ENCODE measurements at regions of chr10 and their contacts with region 1.

Region 1: DNA sequence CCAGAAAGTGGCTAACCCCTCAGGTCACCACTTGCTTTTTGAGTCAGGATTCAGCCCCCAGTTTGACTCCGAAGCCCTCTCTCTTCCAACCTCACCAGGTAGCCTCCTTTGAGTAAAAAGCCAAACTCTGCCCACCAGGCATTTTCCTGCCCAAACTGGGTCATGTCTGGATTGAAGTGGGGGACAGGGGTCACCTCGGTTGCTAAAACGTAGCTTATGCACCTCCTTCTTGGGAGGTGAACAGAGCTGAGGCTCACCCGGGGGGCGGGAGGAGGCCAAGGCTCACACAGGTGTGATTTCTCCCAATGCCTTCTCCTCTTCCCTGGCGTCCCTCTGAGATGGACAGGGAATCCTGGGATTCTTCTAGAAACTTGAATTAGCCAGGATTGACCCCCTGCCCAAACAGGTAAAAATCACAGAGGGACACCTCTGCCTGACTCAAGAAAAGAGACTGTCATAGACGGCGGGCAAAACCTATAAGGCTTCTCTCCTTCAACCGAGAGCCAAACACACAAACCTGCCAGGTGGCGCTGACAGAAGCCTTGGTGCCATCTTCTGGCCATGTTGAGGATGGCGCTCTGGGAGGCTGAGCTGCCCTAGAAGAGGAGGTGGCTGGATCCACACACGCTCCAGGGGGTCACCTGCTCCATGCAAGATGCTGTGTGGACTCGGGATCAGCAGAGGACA is 51.6 kb downstream of the PRLHR start:
- DNase-seq: peak; percentile 64
- H3K4me3 ChIP-seq: no peak overlapping the region
- H3K27ac ChIP-seq: no peak overlapping the region
- H3K4me1 ChIP-seq: no peaks in the 10 kb centered on the region; a peak in 1 of 4 replicates
- H3K27me3 ChIP-seq: no peaks in the 10 kb centered on the region; the same call in 1 of the 2 replicates
- CTCF ChIP-seq: peak; percentile 51
- EP300 ChIP-seq: no peak
- RAD21 ChIP-seq: peak; percentile 78

Region 2: GRCh38 chr10:118183180-118183579 is 360.7 kb before region 1 on chr10:
- CTCF ChIA-PET with region 1: no interaction called
- POLR2A ChIA-PET with region 1: no interaction called
- DNase-seq: no peak
- H3K4me3 ChIP-seq: no peak overlapping the region
- H3K27ac ChIP-seq: no peak overlapping the region
- H3K4me1 ChIP-seq: no peaks in the 10 kb centered on the region
- H3K27me3 ChIP-seq: no peaks in the 10 kb centered on the region
- CTCF ChIP-seq: no peak
- EP300 ChIP-seq: no peak
- RAD21 ChIP-seq: no peak

Region 3: GRCh38 chr10:118557946-118558345 is 14.1 kb after region 1 on chr10:
- CTCF ChIA-PET with region 1: interaction called, 25 read pairs
- POLR2A ChIA-PET with region 1: no interaction called
- DNase-seq: no peak
- H3K4me3 ChIP-seq: no peak overlapping the region
- H3K27ac ChIP-seq: no peak overlapping the region
- H3K4me1 ChIP-seq: no peaks in the 10 kb centered on the region
- H3K27me3 ChIP-seq: no peaks in the 10 kb centered on the region
- CTCF ChIP-seq: no peak
- EP300 ChIP-seq: no peak
- RAD21 ChIP-seq: no peak

Measured in SK-N-SH (cell line).